ENCODE measurements at regions of chr11 and their contacts with region 1.

Region 1: DNA sequence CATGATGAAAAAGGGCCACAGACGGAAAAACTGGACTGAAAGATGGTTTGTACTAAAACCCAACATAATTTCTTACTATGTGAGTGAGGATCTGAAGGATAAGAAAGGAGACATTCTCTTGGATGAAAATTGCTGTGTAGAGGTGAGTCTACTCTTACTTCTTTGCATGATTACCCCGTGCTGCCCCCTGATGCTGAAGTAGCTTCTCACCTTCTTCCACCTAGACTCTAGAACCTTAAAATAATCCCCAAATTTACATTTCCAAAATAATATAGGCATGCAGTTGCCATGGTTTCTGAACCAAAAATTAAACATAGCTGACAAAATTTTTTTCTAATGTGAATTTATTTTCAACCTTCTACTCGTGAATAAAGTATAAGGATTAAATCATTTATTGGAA is 64.2 kb downstream of the SWAP70 start:
- DNase-seq: no peak
- H3K4me3 ChIP-seq: no peak overlapping the region
- H3K27ac ChIP-seq: no peak overlapping the region
- H3K4me1 ChIP-seq: no peaks in the 10 kb centered on the region
- H3K27me3 ChIP-seq: no peaks in the 10 kb centered on the region
- CTCF ChIP-seq: no peak

Region 2: GRCh38 chr11:9701799-9702198 is 26.3 kb before region 1 on chr11:
- intact Hi-C with region 1: loop called (anchors 2 kb)
- DNase-seq: no peak
- H3K4me3 ChIP-seq: no peak overlapping the region
- H3K27ac ChIP-seq: peak overlapping the region in 1 of 2 donors; percentile 64
- H3K4me1 ChIP-seq: peaks cover 0 to 49% (median 10%) of the 10 kb centered on the region in 4 donors
- H3K27me3 ChIP-seq: no peaks in the 10 kb centered on the region
- CTCF ChIP-seq: no peak

Region 3: GRCh38 chr11:9739123-9739894 is 11.3 kb after region 1 on chr11:
- intact Hi-C with region 1: no loop called
- DNase-seq: no peak
- H3K4me3 ChIP-seq: no peak overlapping the region
- H3K27ac ChIP-seq: no peak overlapping the region
- H3K4me1 ChIP-seq: peaks cover 0 to 6% (median 2%) of the 10 kb centered on the region in 4 donors
- H3K27me3 ChIP-seq: no peaks in the 10 kb centered on the region
- CTCF ChIP-seq: no peak

Measured in tibial artery (tissue), 4 donors.